ENCODE measurements at regions of chr1 and their contacts with region 1.

Region 1: GRCh38 chr1:78145105-78145580 is 99.4 kb downstream of the GIPC2 start:
- DNase-seq: peak; percentile 19 to 49 (median 33)
- H3K4me3 ChIP-seq: no peak overlapping the region
- H3K27ac ChIP-seq: no peak overlapping the region
- H3K4me1 ChIP-seq: no peaks in the 10 kb centered on the region
- H3K27me3 ChIP-seq: no peaks in the 10 kb centered on the region
- CTCF ChIP-seq: peak; percentile 52 to 57 (median 56)
- EP300 ChIP-seq: no peak
- POLR2A ChIP-seq: no peak

Region 2: DNA sequence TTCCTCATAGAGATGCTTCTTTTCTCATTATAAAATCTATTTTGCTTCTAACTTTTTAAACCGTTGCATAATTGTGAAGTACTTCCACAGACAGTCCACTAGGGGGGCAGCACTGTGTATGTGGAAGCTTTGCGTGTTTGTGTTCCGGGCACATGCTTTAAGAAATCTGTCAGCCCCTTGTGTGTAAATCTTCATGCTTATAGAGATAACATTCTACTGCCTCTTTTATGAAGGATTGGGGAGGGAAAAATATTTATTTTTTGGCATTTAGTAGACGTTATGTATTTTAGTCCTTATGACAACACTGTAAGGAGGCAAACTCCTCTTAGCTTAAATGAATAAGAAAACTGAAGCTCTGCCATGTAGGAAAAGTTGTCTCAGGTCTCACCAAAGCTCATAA is 188.4 kb after region 1 on chr1:
- intact Hi-C with region 1: no loop called
- DNase-seq: peak in 2 of 5 donors; percentile 13 to 34
- H3K4me3 ChIP-seq: no peak overlapping the region
- H3K27ac ChIP-seq: no peak overlapping the region
- H3K4me1 ChIP-seq: no peaks in the 10 kb centered on the region
- H3K27me3 ChIP-seq: no peaks in the 10 kb centered on the region
- CTCF ChIP-seq: peak; percentile 29 to 73 (median 39)
- EP300 ChIP-seq: no peak
- POLR2A ChIP-seq: no peak

Region 3: DNA sequence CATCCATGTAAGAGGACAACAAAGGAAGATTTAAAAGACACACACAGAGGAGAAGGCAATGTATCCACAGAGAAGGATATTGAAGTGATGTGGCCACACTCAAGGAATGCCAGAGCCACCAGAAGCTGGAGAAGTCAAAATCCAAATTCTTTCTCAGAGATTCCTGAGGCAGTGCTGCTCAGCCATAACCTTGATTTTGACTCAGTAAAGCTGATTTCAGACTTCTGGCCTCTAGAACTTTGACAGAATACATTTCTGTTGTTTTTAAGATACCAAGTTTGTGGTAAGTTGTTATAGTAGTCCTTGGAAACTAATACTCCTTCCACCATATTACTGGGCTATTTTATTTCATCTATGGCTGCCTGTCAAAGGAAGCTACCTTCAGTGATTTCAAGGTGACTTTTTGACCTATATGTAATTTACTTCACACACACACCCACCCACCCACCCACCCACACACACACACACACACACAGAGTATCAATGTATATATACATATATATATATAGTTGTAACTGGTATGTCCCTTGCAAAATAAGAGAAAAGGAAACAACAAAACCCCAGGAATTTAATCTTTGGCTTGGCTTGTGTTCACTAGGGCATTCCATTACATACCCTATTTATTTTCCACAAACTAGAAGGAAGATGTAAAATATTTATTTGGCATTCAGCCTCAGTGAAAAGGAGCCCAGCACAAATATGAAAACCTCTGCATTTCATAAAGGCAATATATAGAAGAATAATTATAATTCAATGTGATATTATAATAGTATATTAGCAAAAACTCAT is 203.5 kb after region 1 on chr1:
- intact Hi-C with region 1: no loop called
- DNase-seq: no peak
- H3K4me3 ChIP-seq: no peak overlapping the region
- H3K27ac ChIP-seq: no peak overlapping the region
- H3K4me1 ChIP-seq: no peaks in the 10 kb centered on the region
- H3K27me3 ChIP-seq: no peaks in the 10 kb centered on the region
- CTCF ChIP-seq: no peak
- EP300 ChIP-seq: no peak
- POLR2A ChIP-seq: no peak

Region 4: GRCh38 chr1:78676347-78676982 is 531.3 kb after region 1 on chr1:
- intact Hi-C with region 1: loop called in 2 of 4 experiments (anchors 5 to 10 kb)
- DNase-seq: peak in 4 of 5 donors; percentile 21 to 66 (median 29)
- H3K4me3 ChIP-seq: no peak overlapping the region
- H3K27ac ChIP-seq: no peak overlapping the region
- H3K4me1 ChIP-seq: no peaks in the 10 kb centered on the region
- H3K27me3 ChIP-seq: no peaks in the 10 kb centered on the region
- CTCF ChIP-seq: peak; percentile 74 to 82 (median 80)
- EP300 ChIP-seq: no peak
- POLR2A ChIP-seq: no peak

Region 5: GRCh38 chr1:78682496-78682895 is 537.4 kb after region 1 on chr1:
- intact Hi-C with region 1: loop called in 2 of 4 experiments (anchors 5 to 10 kb)
- DNase-seq: no peak
- H3K4me3 ChIP-seq: no peak overlapping the region
- H3K27ac ChIP-seq: no peak overlapping the region
- H3K4me1 ChIP-seq: no peaks in the 10 kb centered on the region
- H3K27me3 ChIP-seq: no peaks in the 10 kb centered on the region
- CTCF ChIP-seq: no peak
- EP300 ChIP-seq: no peak
- POLR2A ChIP-seq: no peak

Measured in ovary (tissue), 10 donors.